Transverse colon (tissue), 4 donors: ENCODE measurements at regions of chr3 and their contacts with region 1.

Region 1: GRCh38 chr3:170405101-170405500 is 13.6 kb upstream of the CLDN11 start:
- DNase-seq: no peak
- H3K4me3 ChIP-seq: no peak overlapping the region
- H3K27ac ChIP-seq: no peak overlapping the region
- H3K4me1 ChIP-seq: no peaks in the 10 kb centered on the region
- H3K27me3 ChIP-seq: no peaks in the 10 kb centered on the region
- CTCF ChIP-seq: no peak
- EP300 ChIP-seq: no peak
- POLR2A ChIP-seq: no peak

Region 2: GRCh38 chr3:170317954-170318353 is 87.1 kb before region 1 on chr3:
- in situ Hi-C with region 1: loop called in 3 of 4 experiments (anchors 10 to 25 kb)
- intact Hi-C with region 1: no loop called
- DNase-seq: no peak
- H3K4me3 ChIP-seq: no peak overlapping the region
- H3K27ac ChIP-seq: no peak overlapping the region
- H3K4me1 ChIP-seq: no peaks in the 10 kb centered on the region
- H3K27me3 ChIP-seq: no peaks in the 10 kb centered on the region
- CTCF ChIP-seq: no peak
- EP300 ChIP-seq: no peak
- POLR2A ChIP-seq: no peak